ENCODE measurements at regions of chr4 and their contacts with region 1.

Region 1: GRCh38 chr4:165096776-165097175 is 15.9 kb downstream of the TMEM192 start:
- DNase-seq: peak in 1 of 5 donors; percentile 8
- H3K4me3 ChIP-seq: no peak overlapping the region
- H3K4me3 Mint-ChIP-seq: no peak overlapping the region
- H3K27ac ChIP-seq: no peak overlapping the region
- H3K27ac Mint-ChIP-seq: no peak overlapping the region
- H3K4me1 ChIP-seq: no peaks in the 10 kb centered on the region
- H3K4me1 Mint-ChIP-seq: no peaks in the 10 kb centered on the region
- H3K27me3 ChIP-seq: no peaks in the 10 kb centered on the region
- H3K27me3 Mint-ChIP-seq: no peaks in the 10 kb centered on the region

Region 2: GRCh38 chr4:164779811-164780216 is 317.0 kb before region 1 on chr4:
- CTCF ChIA-PET with region 1: interaction called, 7 read pairs
- POLR2A ChIA-PET with region 1: no interaction called
- intact Hi-C with region 1: loop called (anchors 2 kb)
- DNase-seq: peak in 2 of 5 donors; percentile 6 to 8
- H3K4me3 ChIP-seq: no peak overlapping the region
- H3K4me3 Mint-ChIP-seq: no peak overlapping the region
- H3K27ac ChIP-seq: no peak overlapping the region
- H3K27ac Mint-ChIP-seq: no peak overlapping the region
- H3K4me1 ChIP-seq: no peaks in the 10 kb centered on the region
- H3K4me1 Mint-ChIP-seq: no peaks in the 10 kb centered on the region
- H3K27me3 ChIP-seq: no peaks in the 10 kb centered on the region
- H3K27me3 Mint-ChIP-seq: no peaks in the 10 kb centered on the region